ENCODE measurements at regions of chr2 and their contacts with region 1.

Region 1: DNA sequence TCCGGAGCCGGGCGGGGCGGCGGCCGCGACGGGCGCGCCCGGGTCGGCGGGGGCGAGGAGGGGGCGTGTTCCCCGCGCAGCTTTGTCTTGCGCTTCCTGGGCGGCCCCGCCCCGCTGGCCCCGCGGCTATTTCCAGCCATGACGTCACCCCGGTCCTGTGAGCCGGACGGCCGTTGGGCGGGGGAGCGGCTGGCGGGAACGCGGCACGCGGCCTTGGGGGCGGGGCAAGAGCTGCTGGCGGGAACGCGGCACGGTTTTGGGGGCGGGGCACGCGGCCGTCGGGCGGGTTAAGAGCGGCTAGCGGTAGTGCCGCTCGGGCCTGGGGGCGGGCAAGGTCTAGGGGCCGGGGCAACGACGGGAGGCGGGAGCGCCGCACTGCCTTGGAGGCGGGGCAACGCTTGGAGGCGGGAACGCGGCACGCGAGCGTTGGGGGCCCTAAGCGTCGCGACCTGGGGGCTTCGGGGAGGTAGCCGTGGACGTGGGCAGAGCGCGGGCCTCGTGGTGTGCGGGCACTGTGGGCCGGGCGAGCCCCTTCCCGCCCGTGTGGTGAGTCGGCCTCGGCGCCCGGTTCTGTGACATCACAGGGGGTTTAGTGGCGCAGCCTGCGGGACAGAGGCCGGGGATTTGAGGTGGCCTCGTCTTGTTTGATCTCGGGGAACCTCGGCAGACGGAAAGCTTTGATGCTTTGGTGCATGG is 704 bp downstream of the KLF11 start:
- DNase-seq: peak; percentile 85 to 94 (median 90)
- H3K4me3 ChIP-seq: peak overlapping the region; percentile 38 to 75 (median 61)
- H3K27ac ChIP-seq: peak overlapping the region in 56 of 59 donors; percentile 55 to 94 (median 84)
- H3K27me3 ChIP-seq: no peaks in the 10 kb centered on the region
- CTCF ChIP-seq: peak in 7 of 56 donors; percentile 6 to 21 (median 11)

Region 2: GRCh38 chr2:9813312-9814133 is 230.5 kb before region 1 on chr2:
- intact Hi-C with region 1: loop called (anchors 5 kb)
- DNase-seq: peak in 9 of 10 donors; percentile 61 to 80 (median 66)
- H3K4me3 ChIP-seq: peak overlapping the region in 46 of 59 donors; percentile 3 to 60 (median 34)
- H3K27ac ChIP-seq: no peak overlapping the region
- H3K27me3 ChIP-seq: peaks cover 0 to 4% (median 0%) of the 10 kb centered on the region in 45 donors
- CTCF ChIP-seq: peak; percentile 75 to 97 (median 89)

Region 3: GRCh38 chr2:9951272-9951972 is 92.6 kb before region 1 on chr2 and contains the start of gene GRHL1:
- intact Hi-C with region 1: loop called in 1 of 2 experiments (anchors 10 kb)
- DNase-seq: peak; percentile 82 to 98 (median 90)
- H3K4me3 ChIP-seq: peak within 1 kb of the TSS; percentile 47 to 87 (median 73)
- H3K27ac ChIP-seq: peak within 1 kb of the TSS in 32 of 59 donors; percentile 26 to 81 (median 66)
- H3K27me3 ChIP-seq: peaks cover 0 to 2% (median 0%) of the 10 kb centered on the region in 45 donors
- CTCF ChIP-seq: peak in 15 of 56 donors; percentile 4 to 57 (median 16)
- total RNA-seq, gene GRHL1: 1.6 to 10.9 (median 6.4) TPM

Region 4: GRCh38 chr2:9984217-9984739 is 59.8 kb before region 1 on chr2:
- intact Hi-C with region 1: loop called (anchors 1 to 5 kb)
- DNase-seq: no peak
- H3K4me3 ChIP-seq: no peak overlapping the region
- H3K27ac ChIP-seq: peak overlapping the region in 1 of 59 donors; percentile 54
- H3K27me3 ChIP-seq: no peaks in the 10 kb centered on the region
- CTCF ChIP-seq: peak; percentile 63 to 94 (median 86)

Measured in dorsolateral prefrontal cortex (tissue), 120 donors.